Uterus (tissue), 4 donors: ENCODE measurements at regions of chr15 and their contacts with region 1.

Region 1: DNA sequence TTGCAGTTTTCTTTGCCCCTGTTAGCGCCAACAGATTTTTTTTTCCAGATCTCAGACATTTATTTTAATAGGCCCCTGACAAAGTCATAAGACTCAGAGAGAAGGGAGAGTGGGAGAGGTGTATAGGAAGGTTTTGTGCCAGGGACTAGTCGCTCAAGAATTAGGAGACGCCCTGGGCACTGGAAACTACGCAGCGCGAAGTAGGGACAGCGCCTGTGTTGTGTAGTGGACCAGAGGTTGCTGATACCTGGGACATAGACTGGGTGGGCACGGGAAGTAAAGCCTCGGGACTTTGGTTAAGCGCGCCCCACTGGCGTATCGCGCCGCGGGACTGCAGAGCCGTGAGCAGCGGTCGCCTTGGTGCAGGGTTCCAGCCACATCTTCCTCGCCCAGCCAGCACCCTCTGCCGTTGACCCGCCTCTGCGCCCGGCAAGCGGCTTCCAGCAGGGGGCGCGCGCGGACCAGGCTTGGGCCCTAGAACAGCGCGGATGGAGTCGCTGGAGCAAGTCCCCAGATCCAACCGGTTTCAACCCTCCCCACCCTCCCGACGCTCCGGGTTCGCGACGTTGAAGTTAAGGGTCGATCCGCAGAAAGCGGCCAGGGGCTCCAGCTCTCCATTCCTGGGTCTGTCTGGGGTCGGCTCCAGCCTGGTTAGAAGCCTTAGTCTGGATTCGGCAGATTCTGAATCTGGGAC is 3.0 kb upstream of the ISLR2 start:
- DNase-seq: peak; percentile 85 to 91
- H3K4me3 ChIP-seq: peak overlapping the region; percentile 22 to 33
- H3K27ac ChIP-seq: peak overlapping the region in 1 of 2 donors; percentile 47
- H3K4me1 ChIP-seq: peaks cover 0 to 11% of the 10 kb centered on the region in 2 donors
- H3K27me3 ChIP-seq: peaks cover 14 to 23% of the 10 kb centered on the region in 2 donors
- CTCF ChIP-seq: peak; percentile 98 to 100 (median 99)
- POLR2A ChIP-seq: peak in 1 of 2 donors; percentile 25

Region 2: GRCh38 chr15:73800662-73801345 is 326.6 kb before region 1 on chr15:
- intact Hi-C with region 1: no loop called
- DNase-seq: peak; percentile 22 to 58
- H3K4me3 ChIP-seq: no peak overlapping the region
- H3K27ac ChIP-seq: peak overlapping the region; percentile 50 to 70
- H3K4me1 ChIP-seq: peaks cover 0 to 7% of the 10 kb centered on the region in 2 donors
- H3K27me3 ChIP-seq: no peaks in the 10 kb centered on the region
- CTCF ChIP-seq: no peak
- POLR2A ChIP-seq: no peak

Region 3: GRCh38 chr15:74291101-74292071 is 164.0 kb after region 1 on chr15:
- intact Hi-C with region 1: no loop called
- DNase-seq: peak; percentile 61 to 76
- H3K4me3 ChIP-seq: no peak overlapping the region
- H3K27ac ChIP-seq: no peak overlapping the region
- H3K4me1 ChIP-seq: no peaks in the 10 kb centered on the region
- H3K27me3 ChIP-seq: no peaks in the 10 kb centered on the region
- CTCF ChIP-seq: no peak
- POLR2A ChIP-seq: no peak

Region 4: DNA sequence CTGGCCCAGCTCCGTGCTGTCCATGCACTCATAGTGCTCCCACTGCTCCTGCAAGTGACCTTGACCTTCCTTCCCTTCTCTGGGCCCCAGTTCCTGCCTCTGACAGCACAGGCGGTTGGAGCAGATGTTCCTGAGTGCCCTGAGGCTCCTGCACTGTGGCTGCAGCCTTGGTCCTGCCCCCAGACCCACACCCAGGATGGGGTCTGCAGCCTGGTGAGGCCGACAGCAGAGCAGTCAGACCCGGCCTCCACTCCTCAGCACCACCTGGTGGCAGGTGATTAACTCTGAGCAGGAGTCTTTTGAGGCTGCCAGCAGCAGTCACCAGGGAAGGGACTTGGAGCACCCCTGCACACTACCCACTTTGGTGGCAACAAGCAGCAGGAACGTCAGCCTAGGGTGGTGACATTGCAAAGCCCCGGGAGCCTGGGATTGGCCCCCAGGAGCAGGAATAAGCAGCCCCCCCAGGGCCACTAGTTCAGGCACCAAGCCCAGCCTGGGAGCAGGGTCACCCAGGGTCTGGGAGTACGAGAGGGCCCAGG is 175.5 kb after region 1 on chr15:
- intact Hi-C with region 1: loop called (anchors 5 kb)
- DNase-seq: peak in 1 of 2 donors; percentile 43
- H3K4me3 ChIP-seq: no peak overlapping the region
- H3K27ac ChIP-seq: no peak overlapping the region
- H3K4me1 ChIP-seq: no peaks in the 10 kb centered on the region
- H3K27me3 ChIP-seq: no peaks in the 10 kb centered on the region
- CTCF ChIP-seq: peak; percentile 47 to 69 (median 63)
- POLR2A ChIP-seq: no peak

Region 5: DNA sequence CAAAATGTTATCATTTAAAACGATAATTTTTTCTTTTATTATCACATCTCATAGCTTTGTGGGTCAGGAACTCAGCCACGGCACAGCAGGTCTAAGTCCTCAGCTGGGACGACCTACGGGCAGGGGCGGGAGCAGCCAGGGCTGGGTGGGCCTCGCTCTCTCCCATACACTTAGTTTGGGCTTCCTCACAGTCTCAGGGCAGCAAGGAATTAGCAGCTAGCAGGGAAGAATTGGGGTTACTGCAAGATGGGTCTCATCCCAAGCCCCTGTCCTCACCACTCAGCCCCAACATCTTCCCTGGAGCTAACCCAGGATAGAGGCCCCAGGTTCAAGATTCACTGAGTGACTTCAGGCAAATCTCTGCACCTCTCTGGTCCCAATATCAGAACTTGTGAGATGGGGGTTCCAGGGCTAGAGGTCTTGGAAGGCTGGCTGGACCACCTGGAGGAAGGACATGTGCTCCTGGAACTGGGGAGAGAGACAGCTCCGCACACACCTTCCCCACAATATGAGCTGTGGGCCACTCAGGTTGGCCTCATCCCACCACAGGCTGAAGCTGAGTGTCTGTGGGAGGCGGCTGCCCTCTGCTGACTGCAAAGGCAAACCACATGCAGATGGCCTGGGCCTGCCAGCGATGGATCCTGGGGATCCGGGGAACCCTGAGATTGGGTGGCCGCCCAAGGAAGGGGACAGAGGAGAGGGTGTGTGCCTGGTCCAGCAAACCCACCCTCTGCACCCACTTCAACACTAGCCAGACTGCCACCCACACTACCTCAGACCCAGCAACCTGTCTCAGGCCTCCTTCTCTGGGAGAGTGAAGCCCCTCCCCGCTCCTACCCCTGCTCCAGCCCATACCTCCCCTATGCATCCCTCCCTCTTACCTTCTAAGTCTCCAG is 195.0 kb after region 1 on chr15:
- intact Hi-C with region 1: loop called (anchors 5 kb)
- DNase-seq: peak; percentile 60 to 71
- H3K4me3 ChIP-seq: no peak overlapping the region
- H3K27ac ChIP-seq: no peak overlapping the region
- H3K4me1 ChIP-seq: peaks cover 0 to 13% of the 10 kb centered on the region in 2 donors
- H3K27me3 ChIP-seq: no peaks in the 10 kb centered on the region
- CTCF ChIP-seq: peak; percentile 72 to 91 (median 82)
- POLR2A ChIP-seq: no peak